ENCODE measurements at regions of chr1 and their contacts with region 1.

Region 1: DNA sequence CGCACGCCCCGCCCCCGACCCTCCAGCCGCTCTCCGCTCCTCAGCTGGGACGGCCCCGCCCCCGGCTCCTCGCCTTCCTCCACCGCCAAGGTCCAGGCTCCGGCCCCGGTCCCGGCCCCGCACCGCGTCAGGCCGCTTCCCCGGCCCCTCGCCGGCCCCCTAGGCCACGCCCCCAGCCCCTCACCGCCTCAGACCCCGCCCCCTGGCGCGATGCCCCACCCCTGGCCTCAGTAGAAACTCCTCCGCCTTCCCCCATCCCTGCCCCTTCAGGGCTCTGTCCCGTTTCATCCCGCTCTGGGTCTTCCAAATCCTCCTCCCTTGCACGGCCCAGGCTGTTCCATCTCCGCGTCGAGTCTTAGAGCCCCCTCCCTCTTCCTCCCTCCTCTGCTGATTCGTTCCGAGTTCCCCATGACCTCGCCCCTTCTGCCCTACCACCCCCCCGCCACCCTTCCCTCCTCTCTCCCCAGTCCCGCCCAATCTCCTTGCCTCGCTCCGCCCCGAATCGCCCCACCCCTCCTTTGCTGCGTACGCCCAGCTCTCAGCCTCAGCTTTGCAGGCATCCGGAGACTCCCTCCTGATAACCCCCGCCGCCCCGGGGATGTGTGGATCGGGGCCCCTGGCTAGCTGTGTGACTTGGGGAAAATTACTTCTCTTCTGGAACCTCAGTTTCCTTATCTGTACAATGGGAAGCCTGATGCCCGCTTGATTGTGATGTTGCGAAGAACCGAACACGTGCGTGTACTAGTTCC is 448 bp upstream of the ASAP3 start:
- DNase-seq: peak; percentile 76 to 92 (median 90)
- ATAC-seq: peak; percentile 94
- H3K4me3 ChIP-seq: peak overlapping the region; percentile 67
- H3K4me3 Mint-ChIP-seq: peak overlapping the region; percentile 74 to 97 (median 88)
- H3K27ac ChIP-seq: peak overlapping the region; percentile 63
- H3K27ac Mint-ChIP-seq: peak overlapping the region; percentile 65 to 83 (median 76)
- H3K4me1 ChIP-seq: peaks cover 13% of the 10 kb centered on the region in 2 donors
- H3K4me1 Mint-ChIP-seq: peaks cover 12 to 20% (median 15%) of the 10 kb centered on the region in 7 donors
- H3K27me3 ChIP-seq: no peaks in the 10 kb centered on the region
- H3K27me3 Mint-ChIP-seq: peaks cover 0 to 73% (median 13%) of the 10 kb centered on the region in 5 donors

Region 2: DNA sequence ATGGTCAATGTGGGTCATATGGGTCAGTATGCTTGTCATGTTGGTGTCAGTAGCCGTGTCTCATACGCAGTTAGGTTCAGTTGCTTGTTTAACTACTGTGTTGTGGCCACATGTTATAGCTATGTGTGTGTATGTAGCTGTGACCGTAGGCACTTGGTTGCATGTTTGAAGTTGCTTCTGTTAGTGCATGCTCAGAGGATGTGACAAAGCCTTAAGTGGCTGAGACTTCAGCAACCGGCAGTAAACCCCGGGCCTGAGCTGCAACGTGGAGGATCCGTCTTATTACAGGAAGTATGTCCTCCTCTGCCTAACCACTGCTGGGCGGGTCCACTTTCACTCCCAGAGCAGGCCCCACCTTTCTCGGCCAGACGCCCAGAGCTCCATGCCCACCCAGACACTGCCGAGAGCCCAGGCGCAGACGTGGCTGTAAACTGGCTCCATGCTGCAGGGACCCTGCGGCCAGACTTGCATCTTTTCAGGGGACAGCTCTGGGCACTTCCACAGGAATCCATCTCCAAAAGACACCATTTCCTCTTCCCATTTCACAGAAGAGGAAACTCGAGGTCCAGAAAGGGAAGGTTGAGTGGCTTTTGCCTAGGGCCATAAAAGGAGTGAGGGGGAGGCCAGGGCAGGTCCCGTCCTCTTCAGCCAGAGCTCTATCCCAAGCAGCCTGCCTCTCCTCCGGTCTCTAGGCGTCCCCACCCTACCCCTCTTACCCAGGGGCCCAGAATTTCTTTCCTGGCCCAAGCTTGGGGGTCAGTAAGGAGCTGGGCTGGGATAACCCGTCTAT is 62.0 kb before region 1 on chr1:
- CTCF ChIA-PET with region 1: no interaction called
- POLR2A ChIA-PET with region 1: no interaction called
- intact Hi-C with region 1: loop called in 1 of 2 experiments (anchors 1 kb)
- DNase-seq: peak in 8 of 9 donors; percentile 40 to 73 (median 66)
- ATAC-seq: peak; percentile 74
- H3K4me3 ChIP-seq: peak overlapping the region; percentile 59
- H3K4me3 Mint-ChIP-seq: peak overlapping the region; percentile 74 to 96 (median 92)
- H3K27ac ChIP-seq: peak overlapping the region; percentile 65
- H3K27ac Mint-ChIP-seq: peak overlapping the region; percentile 58 to 96 (median 91)
- H3K4me1 ChIP-seq: peaks cover 10 to 20% of the 10 kb centered on the region in 2 donors
- H3K4me1 Mint-ChIP-seq: peaks cover 18 to 45% (median 37%) of the 10 kb centered on the region in 7 donors
- H3K27me3 ChIP-seq: no peaks in the 10 kb centered on the region
- H3K27me3 Mint-ChIP-seq: peaks cover 0 to 36% (median 0%) of the 10 kb centered on the region in 5 donors

Region 3: DNA sequence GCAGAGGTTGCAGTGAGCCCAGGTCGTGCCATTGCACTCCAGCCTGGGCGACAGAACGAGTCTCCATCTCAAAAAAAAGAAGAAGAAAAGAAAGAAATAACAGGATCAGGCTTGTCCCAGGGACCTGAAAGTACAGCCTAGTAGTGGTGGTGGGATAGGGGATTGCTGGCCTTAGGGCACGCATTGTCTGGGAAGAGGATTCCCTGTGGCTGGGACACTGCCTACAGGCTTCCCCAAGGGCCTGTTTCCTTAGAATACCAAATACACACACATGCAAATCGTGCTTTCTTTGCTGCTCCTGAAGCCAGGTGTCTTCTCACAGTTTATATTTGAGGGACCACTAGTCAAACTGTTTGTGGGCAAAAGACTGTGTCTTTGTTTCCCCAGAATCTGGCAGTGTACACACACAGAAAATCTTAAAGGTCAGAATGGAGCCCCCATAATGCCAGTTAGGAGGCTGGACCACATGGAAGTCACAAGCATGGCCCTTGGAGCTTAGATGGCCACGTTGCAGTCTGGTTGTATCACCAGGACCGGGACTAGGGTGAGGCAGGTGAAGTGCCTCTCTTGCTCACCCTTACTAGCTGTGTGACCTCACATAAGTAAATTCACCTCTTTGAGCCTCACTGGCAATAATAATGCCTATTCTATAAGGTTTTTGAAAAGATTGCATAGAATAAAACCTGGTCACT is 12.2 kb after region 1 on chr1:
- CTCF ChIA-PET with region 1: interaction called, 44 read pairs
- POLR2A ChIA-PET with region 1: interaction called, 5 read pairs
- intact Hi-C with region 1: no loop called
- DNase-seq: no peak
- ATAC-seq: peak; percentile 31
- H3K4me3 ChIP-seq: no peak overlapping the region
- H3K4me3 Mint-ChIP-seq: no peak overlapping the region
- H3K27ac ChIP-seq: no peak overlapping the region
- H3K27ac Mint-ChIP-seq: no peak overlapping the region
- H3K4me1 ChIP-seq: no peaks in the 10 kb centered on the region
- H3K4me1 Mint-ChIP-seq: peaks cover 0 to 5% (median 0%) of the 10 kb centered on the region in 7 donors
- H3K27me3 ChIP-seq: no peaks in the 10 kb centered on the region
- H3K27me3 Mint-ChIP-seq: peaks cover 0 to 14% (median 0%) of the 10 kb centered on the region in 5 donors

Region 4: GRCh38 chr1:23530747-23531561 is 46.5 kb after region 1 on chr1 and contains the start of gene E2F2:
- CTCF ChIA-PET with region 1: no interaction called
- POLR2A ChIA-PET with region 1: interaction called, 3 read pairs
- intact Hi-C with region 1: loop called (anchors 1 kb)
- DNase-seq: peak; percentile 61 to 81 (median 78)
- ATAC-seq: peak; percentile 83
- H3K4me3 ChIP-seq: peak within 1 kb of the TSS; percentile 52
- H3K4me3 Mint-ChIP-seq: peak within 1 kb of the TSS; percentile 85 to 97 (median 90)
- H3K27ac ChIP-seq: no peak within 1 kb of the TSS
- H3K27ac Mint-ChIP-seq: peak within 1 kb of the TSS in 7 of 9 donors; percentile 36 to 96 (median 70)
- H3K4me1 ChIP-seq: peaks cover 61 to 71% of the 10 kb centered on the region in 2 donors
- H3K4me1 Mint-ChIP-seq: peaks cover 49 to 76% (median 67%) of the 10 kb centered on the region in 7 donors
- H3K27me3 ChIP-seq: no peaks in the 10 kb centered on the region
- H3K27me3 Mint-ChIP-seq: peaks cover 0 to 4% (median 0%) of the 10 kb centered on the region in 5 donors
- total RNA-seq, gene E2F2: 0.14 to 65.7 (median 2.5) TPM in 4 of 5 experiments, not detected in the other

Region 5: GRCh38 chr1:23691499-23692307 is 207.3 kb after region 1 on chr1 and contains the start of gene RPL11:
- CTCF ChIA-PET with region 1: no interaction called
- POLR2A ChIA-PET with region 1: interaction called, 3 read pairs
- intact Hi-C with region 1: loop called in 1 of 2 experiments (anchors 1 kb)
- DNase-seq: peak; percentile 60 to 92 (median 88)
- ATAC-seq: peak; percentile 100
- H3K4me3 ChIP-seq: peak within 1 kb of the TSS; percentile 82
- H3K4me3 Mint-ChIP-seq: peak within 1 kb of the TSS; percentile 87 to 96 (median 94)
- H3K27ac ChIP-seq: peak within 1 kb of the TSS; percentile 88
- H3K27ac Mint-ChIP-seq: peak within 1 kb of the TSS; percentile 87 to 97 (median 93)
- H3K4me1 ChIP-seq: peaks cover 19 to 20% of the 10 kb centered on the region in 2 donors
- H3K4me1 Mint-ChIP-seq: peaks cover 33 to 50% (median 45%) of the 10 kb centered on the region in 7 donors
- H3K27me3 ChIP-seq: no peaks in the 10 kb centered on the region
- H3K27me3 Mint-ChIP-seq: no peaks in the 10 kb centered on the region
- total RNA-seq, gene RPL11: 1,206 to 2,420 (median 2,172) TPM